PC-3 (cell line): ENCODE measurements at regions of chr12 and their contacts with region 1.

Region 1: DNA sequence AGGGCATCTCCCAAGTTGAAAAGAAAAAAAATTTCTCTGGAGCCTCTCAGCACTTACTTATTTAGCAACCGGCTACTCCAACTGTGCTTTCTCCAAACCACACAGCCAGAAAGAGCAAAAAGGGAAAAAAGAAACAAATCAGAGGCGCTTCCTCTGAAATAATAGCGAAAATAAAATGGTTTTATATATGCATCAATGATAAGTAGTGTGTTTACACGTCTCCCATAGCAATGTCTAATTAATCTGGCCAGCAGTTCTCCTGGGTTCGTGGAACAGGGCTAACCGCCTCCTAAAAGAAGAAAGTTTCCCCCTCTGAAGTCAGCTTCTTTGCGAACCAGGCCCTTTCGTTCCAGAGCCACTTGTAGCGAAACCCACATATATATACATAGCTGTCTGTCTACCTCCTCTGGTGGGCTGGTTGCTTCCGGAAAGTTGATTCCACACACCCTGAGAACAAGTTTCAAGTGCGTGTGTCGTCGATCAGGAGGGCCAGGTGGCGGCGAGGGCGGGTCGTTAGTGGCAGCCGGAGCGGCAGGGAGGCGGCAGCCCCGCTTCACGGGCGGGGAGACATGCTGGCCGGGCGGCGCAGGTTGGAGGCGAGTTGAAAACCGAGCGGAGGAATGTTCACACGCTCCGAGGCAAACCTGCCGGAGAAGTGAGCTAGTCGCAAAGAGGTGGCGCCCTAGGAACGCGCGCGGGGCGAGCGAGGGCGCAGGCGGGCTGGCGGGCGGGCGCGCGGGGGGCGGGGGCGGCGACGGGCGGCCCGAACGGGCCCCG is 2.7 kb downstream of the PTHLH start:
- DNase-seq: peak; percentile 100
- ATAC-seq: peak; percentile 57
- H3K4me3 ChIP-seq: peak overlapping the region; percentile 68
- H3K27ac ChIP-seq: peak overlapping the region; percentile 76
- H3K4me1 ChIP-seq: peaks cover 78% of the 10 kb centered on the region
- H3K27me3 ChIP-seq: no peaks in the 10 kb centered on the region
- CTCF ChIP-seq: no peak

Region 2: GRCh38 chr12:27710592-27711316 is 259.1 kb before region 1 on chr12 and contains the start of gene MRPS35:
- CTCF ChIA-PET with region 1: no interaction called
- POLR2A ChIA-PET with region 1: no interaction called
- intact Hi-C with region 1: no loop called
- DNase-seq: peak; percentile 95
- ATAC-seq: peak; percentile 96
- H3K4me3 ChIP-seq: peak within 1 kb of the TSS; percentile 87
- H3K27ac ChIP-seq: peak within 1 kb of the TSS; percentile 65
- H3K4me1 ChIP-seq: peaks cover 14% of the 10 kb centered on the region
- H3K27me3 ChIP-seq: no peaks in the 10 kb centered on the region
- CTCF ChIP-seq: no peak
- total RNA-seq, gene MRPS35: 82.5 and 117 TPM in 2 replicates

Region 3: DNA sequence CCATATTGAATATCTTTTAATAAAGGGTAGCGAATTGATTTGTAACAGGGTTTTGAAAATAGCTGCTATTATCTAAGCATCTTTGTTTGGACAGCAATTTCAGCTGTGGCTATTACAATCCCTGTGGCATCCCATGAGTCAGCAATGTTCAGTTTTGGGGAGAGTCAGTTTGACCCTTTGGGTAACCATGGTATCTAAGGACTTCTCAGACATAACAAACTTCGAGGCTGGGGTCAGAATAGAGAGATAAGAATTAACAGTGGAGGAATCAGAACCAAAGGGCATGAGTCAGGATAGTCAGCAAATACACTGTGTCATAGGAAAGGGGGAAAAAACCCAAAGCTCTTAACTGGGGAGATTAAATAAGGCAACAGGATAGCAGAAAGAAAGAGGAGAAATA is 14.5 kb after region 1 on chr12:
- CTCF ChIA-PET with region 1: interaction called, 15 read pairs
- POLR2A ChIA-PET with region 1: interaction called, 26 read pairs
- intact Hi-C with region 1: loop called (anchors 1 kb)
- DNase-seq: peak; percentile 100
- ATAC-seq: peak; percentile 54
- H3K4me3 ChIP-seq: peak overlapping the region; percentile 6
- H3K27ac ChIP-seq: peak overlapping the region; percentile 73
- H3K4me1 ChIP-seq: peaks cover 47% of the 10 kb centered on the region
- H3K27me3 ChIP-seq: no peaks in the 10 kb centered on the region
- CTCF ChIP-seq: no peak

Region 4: GRCh38 chr12:28130625-28131598 is 161.1 kb after region 1 on chr12:
- CTCF ChIA-PET with region 1: interaction called, 4 read pairs
- POLR2A ChIA-PET with region 1: interaction called, 3 read pairs
- intact Hi-C with region 1: loop called (anchors 1 kb)
- DNase-seq: peak; percentile 98
- ATAC-seq: peak; percentile 98
- H3K4me3 ChIP-seq: 0 out of 2 replicates have a peak overlapping the region, but pooled peaks have one; percentile 9
- H3K27ac ChIP-seq: peak overlapping the region; percentile 92
- H3K4me1 ChIP-seq: peaks cover 31% of the 10 kb centered on the region
- H3K27me3 ChIP-seq: no peaks in the 10 kb centered on the region
- CTCF ChIP-seq: no peak

Region 5: GRCh38 chr12:28704477-28705169 is 734.8 kb after region 1 on chr12:
- CTCF ChIA-PET with region 1: interaction called, 3 read pairs
- POLR2A ChIA-PET with region 1: no interaction called
- intact Hi-C with region 1: loop called (anchors 1 kb)
- DNase-seq: peak; percentile 63
- ATAC-seq: peak; percentile 93
- H3K4me3 ChIP-seq: no peak overlapping the region
- H3K27ac ChIP-seq: no peak overlapping the region
- H3K4me1 ChIP-seq: peaks cover 9% of the 10 kb centered on the region
- H3K27me3 ChIP-seq: no peaks in the 10 kb centered on the region
- CTCF ChIP-seq: no peak

Region 6: GRCh38 chr12:28807535-28807934 is 837.7 kb after region 1 on chr12:
- CTCF ChIA-PET with region 1: no interaction called
- POLR2A ChIA-PET with region 1: no interaction called
- intact Hi-C with region 1: loop called (anchors 2 kb)
- DNase-seq: no peak
- ATAC-seq: peak; percentile 79
- H3K4me3 ChIP-seq: no peak overlapping the region
- H3K27ac ChIP-seq: no peak overlapping the region
- H3K4me1 ChIP-seq: no peaks in the 10 kb centered on the region
- H3K27me3 ChIP-seq: no peaks in the 10 kb centered on the region
- CTCF ChIP-seq: no peak

Region 7: DNA sequence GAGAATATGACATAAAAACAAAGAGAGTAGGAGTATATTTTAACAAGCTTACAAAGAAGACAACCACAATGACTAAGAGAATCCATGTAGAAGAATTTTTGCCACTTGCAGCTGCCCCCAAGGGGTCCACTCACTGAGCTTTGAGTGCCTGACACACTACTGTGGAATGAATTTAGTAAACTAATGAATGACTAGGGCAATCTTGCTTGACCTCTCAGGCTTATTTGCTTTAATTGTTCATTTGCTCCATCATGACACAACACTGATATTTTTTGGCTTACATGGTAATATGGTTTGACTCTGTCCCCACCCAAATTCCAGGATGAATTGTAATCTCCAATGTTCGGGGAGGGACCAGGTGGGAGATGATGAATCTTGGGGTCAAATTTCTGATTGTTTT is 930.1 kb after region 1 on chr12:
- CTCF ChIA-PET with region 1: interaction called, 3 read pairs
- POLR2A ChIA-PET with region 1: no interaction called
- intact Hi-C with region 1: loop called (anchors 1 kb)
- DNase-seq: peak; percentile 99
- ATAC-seq: peak; percentile 95
- H3K4me3 ChIP-seq: no peak overlapping the region
- H3K27ac ChIP-seq: peak overlapping the region; percentile 71
- H3K4me1 ChIP-seq: peaks cover 7% of the 10 kb centered on the region
- H3K27me3 ChIP-seq: no peaks in the 10 kb centered on the region
- CTCF ChIP-seq: no peak